IMR-90 (cell line): ENCODE measurements at regions of chr17 and their contacts with region 1.

Region 1: DNA sequence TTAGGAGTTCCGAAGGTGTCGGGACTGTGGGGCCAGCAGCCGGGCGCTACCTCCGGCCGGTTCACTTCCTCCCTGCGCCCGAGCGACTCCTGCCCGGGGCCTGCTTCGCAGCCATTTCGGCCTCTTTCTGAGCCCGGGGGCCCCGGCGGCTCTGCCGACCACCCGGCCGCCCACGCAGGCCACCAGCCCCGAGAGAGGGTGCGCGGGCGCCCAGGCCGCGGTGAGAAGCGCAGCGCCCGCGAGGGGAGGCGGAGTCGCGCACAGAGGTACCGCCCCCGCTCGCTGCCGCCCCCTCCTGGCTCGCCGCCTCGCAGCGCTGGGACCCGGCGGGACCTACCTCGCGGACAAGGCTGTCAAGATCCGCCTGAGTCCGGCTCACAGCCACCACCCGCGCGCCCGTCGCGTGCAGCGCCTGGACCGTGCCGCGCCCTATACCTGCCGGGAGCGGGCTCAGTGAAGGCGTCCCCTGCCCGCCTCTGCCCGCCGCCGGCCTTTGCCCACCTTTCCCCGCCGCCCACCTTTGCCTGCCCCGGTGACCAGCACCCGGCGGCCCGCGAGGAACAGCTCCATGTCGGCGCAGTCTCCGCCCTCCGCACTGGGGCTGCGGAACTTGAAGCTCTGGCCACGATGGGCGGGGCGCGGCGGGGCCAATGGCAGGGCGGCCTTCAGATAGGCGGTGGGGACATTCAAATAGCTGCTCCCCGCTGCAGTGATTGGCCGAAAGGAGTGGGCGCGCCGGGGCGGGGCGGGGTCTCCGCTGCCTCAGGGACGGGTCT is at the start of gene DCXR:
- DNase-seq: peak; percentile 90
- ATAC-seq: peak; percentile 98
- H3K4me3 ChIP-seq: peak within 1 kb of the TSS; percentile 54
- H3K27ac ChIP-seq: peak within 1 kb of the TSS; percentile 65
- H3K4me1 ChIP-seq: peaks cover 7% of the 10 kb centered on the region
- H3K27me3 ChIP-seq: no peaks in the 10 kb centered on the region
- CTCF ChIP-seq: peak; percentile 87
- POLR2A ChIP-seq: peak; percentile 60
- RAD21 ChIP-seq: peak; percentile 35; the same call in 1 of the 2 replicates
- total RNA-seq, gene DCXR: 36.6 and 36.9 TPM in 2 replicates

Region 2: GRCh38 chr17:81977211-81978027 is 59.9 kb before region 1 on chr17 and contains the start of gene ASPSCR1:
- CTCF ChIA-PET with region 1: no interaction called
- POLR2A ChIA-PET with region 1: no interaction called
- dilution Hi-C with region 1: no loop called
- in situ Hi-C with region 1: no loop called
- intact Hi-C with region 1: no loop called
- DNase-seq: peak; percentile 91
- ATAC-seq: peak; percentile 98
- H3K4me3 ChIP-seq: peak within 1 kb of the TSS; percentile 88
- H3K27ac ChIP-seq: peak within 1 kb of the TSS; percentile 87
- H3K4me1 ChIP-seq: peaks cover 3% of the 10 kb centered on the region
- H3K27me3 ChIP-seq: no peaks in the 10 kb centered on the region
- CTCF ChIP-seq: 0 out of 2 replicates have a peak, but pooled peaks have one; percentile 1
- POLR2A ChIP-seq: peak; percentile 90
- RAD21 ChIP-seq: no peak
- total RNA-seq, gene ASPSCR1: 7.2 and 8.3 TPM in 2 replicates

Region 3: DNA sequence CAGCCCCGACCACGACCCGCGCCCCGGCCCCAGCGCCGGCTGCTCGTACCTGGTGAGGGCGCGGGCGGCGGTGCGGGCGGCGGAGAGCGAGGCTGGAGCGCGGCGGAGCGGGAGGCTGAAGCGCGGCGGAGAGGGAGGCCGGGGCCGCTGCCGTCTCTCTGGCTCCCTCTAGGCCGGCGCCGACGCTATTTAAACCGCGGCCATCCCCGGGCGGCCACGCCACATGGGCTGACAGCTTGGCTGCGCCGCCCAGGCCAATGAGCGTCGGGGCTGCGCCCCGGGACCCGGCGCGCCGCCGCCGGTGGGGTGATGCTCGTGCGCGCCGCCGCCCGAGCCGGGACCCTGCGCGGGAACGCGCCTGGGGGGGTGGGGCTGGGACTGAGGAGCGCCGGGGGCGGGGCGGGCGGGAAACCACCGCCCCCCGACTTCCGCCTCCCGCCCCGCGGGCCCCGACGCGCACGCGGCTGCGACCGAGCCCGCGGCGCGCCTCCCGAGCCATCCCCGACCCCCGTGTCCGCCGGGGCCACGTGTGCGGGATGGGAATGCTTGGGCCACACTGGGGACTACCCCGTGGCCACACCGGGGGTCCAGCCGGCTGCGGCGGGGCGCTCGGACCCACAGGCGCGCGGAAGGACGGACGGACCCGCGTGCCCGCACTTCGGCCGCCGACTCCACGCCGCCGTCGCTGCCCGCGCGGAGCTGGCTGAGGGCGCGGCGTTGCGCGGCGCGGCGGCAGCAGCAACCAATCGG is 60.9 kb after region 1 on chr17 and contains the start of gene FASN:
- CTCF ChIA-PET with region 1: no interaction called
- POLR2A ChIA-PET with region 1: interaction called, 4 read pairs
- dilution Hi-C with region 1: no loop called
- in situ Hi-C with region 1: no loop called
- intact Hi-C with region 1: loop called (anchors 2 kb)
- DNase-seq: peak; percentile 93
- ATAC-seq: peak; percentile 85
- H3K4me3 ChIP-seq: peak within 1 kb of the TSS; percentile 72
- H3K27ac ChIP-seq: peak within 1 kb of the TSS; percentile 94
- H3K4me1 ChIP-seq: peaks cover 13% of the 10 kb centered on the region
- H3K27me3 ChIP-seq: no peaks in the 10 kb centered on the region
- CTCF ChIP-seq: peak; percentile 66
- POLR2A ChIP-seq: peak; percentile 97
- RAD21 ChIP-seq: peak; percentile 15; the same call in 1 of the 2 replicates
- total RNA-seq, gene FASN: 12.4 and 15.3 TPM in 2 replicates

Region 4: GRCh38 chr17:82230627-82231311 is 193.5 kb after region 1 on chr17:
- CTCF ChIA-PET with region 1: no interaction called
- POLR2A ChIA-PET with region 1: no interaction called
- dilution Hi-C with region 1: no loop called
- in situ Hi-C with region 1: no loop called
- intact Hi-C with region 1: no loop called
- DNase-seq: peak; percentile 81
- ATAC-seq: peak; percentile 66
- H3K4me3 ChIP-seq: peak overlapping the region; percentile 98
- H3K27ac ChIP-seq: peak overlapping the region; percentile 91
- H3K4me1 ChIP-seq: peaks cover 34% of the 10 kb centered on the region
- H3K27me3 ChIP-seq: no peaks in the 10 kb centered on the region
- CTCF ChIP-seq: peak; percentile 45
- POLR2A ChIP-seq: no peak; the same call in 1 of the 2 replicates
- RAD21 ChIP-seq: peak; percentile 27; the same call in 1 of the 2 replicates

Region 5: DNA sequence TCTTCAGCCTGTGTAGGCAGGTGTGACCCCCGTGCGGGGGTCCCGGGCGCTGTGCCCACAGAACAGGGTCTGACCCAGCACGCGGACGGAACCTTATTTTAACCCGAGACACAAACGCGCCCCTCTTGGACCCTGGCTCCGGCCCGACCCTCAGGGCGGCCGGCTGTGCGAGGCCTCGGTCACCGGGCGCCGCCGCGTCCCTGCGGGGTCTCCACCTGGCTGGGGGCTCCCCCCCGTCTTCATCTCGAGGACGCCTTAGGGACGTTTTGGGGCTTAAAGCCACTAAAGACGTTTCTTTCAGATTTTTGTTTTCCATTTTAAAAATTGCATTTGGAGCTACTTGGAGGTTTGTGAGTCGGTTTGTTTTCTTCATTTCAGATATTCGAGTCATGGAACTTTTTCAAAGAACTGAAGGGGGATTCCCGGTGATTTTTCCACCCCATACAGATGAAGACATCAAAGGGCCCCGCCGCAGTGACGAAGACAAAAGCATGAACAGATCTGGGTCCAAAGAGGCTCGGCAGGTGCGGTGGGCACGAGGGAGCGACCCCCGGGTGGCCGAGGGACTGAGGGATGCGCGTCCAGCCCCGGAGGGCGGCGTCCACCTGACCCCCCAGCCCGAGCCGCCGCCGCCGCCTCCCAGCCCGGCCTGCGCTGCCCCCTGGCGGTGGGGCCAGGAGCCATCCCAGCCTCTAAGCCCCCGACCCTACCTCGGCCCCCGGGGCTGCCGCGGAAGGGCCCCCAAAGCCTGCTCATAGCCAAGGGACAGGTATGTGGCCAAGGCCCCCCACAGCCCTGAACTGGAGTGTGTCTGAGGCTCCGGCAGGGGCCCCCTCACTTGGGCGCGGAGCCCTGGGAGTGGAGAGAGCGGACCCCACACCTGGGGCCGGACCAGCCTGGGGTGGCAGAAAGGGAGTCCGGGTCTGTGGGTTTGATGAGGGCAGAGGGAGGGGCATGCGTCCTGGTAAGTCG is 283.9 kb after region 1 on chr17:
- CTCF ChIA-PET with region 1: no interaction called
- POLR2A ChIA-PET with region 1: no interaction called
- dilution Hi-C with region 1: no loop called
- in situ Hi-C with region 1: no loop called
- intact Hi-C with region 1: loop called (anchors 10 kb)
- DNase-seq: no peak
- ATAC-seq: peak; percentile 80
- H3K4me3 ChIP-seq: no peak overlapping the region
- H3K27ac ChIP-seq: no peak overlapping the region
- H3K4me1 ChIP-seq: no peaks in the 10 kb centered on the region
- H3K27me3 ChIP-seq: peaks cover 10% of the 10 kb centered on the region; the same call in 1 of the 2 replicates
- CTCF ChIP-seq: peak; percentile 66
- POLR2A ChIP-seq: no peak
- RAD21 ChIP-seq: peak; percentile 70